Activated CD4-positive, alpha-beta T cell treated with anti-CD3 and anti-CD28 coated beads for 36 hours (primary cell): ENCODE measurements at regions of chr1 and their contacts with region 1.

Region 1: GRCh38 chr1:48236716-48237470 is 14.4 kb downstream of the SLC5A9 start:
- DNase-seq: no peak
- ATAC-seq: no peak
- H3K4me3 Mint-ChIP-seq: no peak overlapping the region
- H3K27ac Mint-ChIP-seq: no peak overlapping the region
- H3K4me1 Mint-ChIP-seq: no peaks in the 10 kb centered on the region
- H3K27me3 Mint-ChIP-seq: no peaks in the 10 kb centered on the region

Region 2: DNA sequence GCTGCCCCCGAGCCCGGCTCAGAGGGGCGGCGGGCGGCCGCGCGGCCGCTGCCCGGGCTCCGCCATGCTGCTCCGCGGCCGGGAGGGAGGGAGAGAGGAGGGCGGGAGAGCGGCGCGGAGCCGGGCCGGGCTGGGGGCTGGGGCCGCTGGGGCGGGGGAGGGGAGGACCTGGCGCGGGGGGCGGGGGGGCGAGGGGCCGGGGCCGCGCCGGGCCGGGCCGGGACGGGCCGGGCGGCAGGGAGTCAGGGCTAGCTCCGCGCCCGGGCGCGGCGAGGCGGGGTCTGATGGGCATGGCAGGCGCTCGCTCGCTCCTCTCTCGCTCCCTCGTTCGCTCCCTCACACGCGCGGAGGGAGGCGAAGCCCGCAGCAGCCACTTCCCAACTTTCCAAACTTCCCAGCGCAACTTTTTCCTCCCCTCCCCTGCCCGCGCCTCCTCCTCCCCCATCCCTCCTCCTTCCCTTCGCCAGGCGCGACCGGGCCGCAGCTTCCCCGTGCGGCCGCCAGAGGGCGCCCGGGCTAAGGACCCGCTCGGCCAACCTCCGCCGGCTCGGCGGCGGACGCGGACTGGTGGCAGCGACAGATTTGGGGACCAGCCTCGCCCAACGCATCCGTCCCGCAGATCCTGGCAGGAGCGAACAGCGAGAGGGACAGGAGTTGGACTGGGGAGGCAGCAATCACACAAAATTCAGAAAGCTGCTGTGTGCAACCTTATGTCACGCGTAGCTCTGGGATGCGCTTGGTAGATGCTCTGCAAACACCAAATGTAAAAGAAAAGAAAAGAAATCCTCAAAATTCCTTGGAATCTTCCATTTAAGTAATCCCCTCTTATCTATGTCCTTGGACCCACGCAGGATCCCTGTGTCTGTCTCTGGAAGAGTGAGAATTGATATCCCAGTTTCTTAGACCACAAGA is 239.3 kb before region 1 on chr1 and contains the start of gene TRABD2B:
- CTCF ChIA-PET with region 1: interaction called, 3 read pairs
- POLR2A ChIA-PET with region 1: no interaction called
- intact Hi-C with region 1: loop called in 1 of 2 experiments (anchors 2 kb)
- DNase-seq: peak; percentile 80
- ATAC-seq: peak; percentile 92
- H3K4me3 Mint-ChIP-seq: peak within 1 kb of the TSS; percentile 53
- H3K27ac Mint-ChIP-seq: no peak within 1 kb of the TSS
- H3K4me1 Mint-ChIP-seq: peaks cover 4% of the 10 kb centered on the region
- H3K27me3 Mint-ChIP-seq: peaks cover 40% of the 10 kb centered on the region
- total RNA-seq, gene TRABD2B: not detected

Region 3: GRCh38 chr1:48093696-48094528 is 143.0 kb before region 1 on chr1:
- CTCF ChIA-PET with region 1: interaction called, 8 read pairs
- POLR2A ChIA-PET with region 1: no interaction called
- intact Hi-C with region 1: loop called (anchors 1 kb)
- DNase-seq: peak; percentile 86
- ATAC-seq: peak; percentile 89
- H3K4me3 Mint-ChIP-seq: peak overlapping the region; percentile 15
- H3K27ac Mint-ChIP-seq: no peak overlapping the region
- H3K4me1 Mint-ChIP-seq: peaks cover 4% of the 10 kb centered on the region
- H3K27me3 Mint-ChIP-seq: peaks cover 50% of the 10 kb centered on the region

Region 4: GRCh38 chr1:48109390-48110013 is 127.4 kb before region 1 on chr1:
- CTCF ChIA-PET with region 1: interaction called, 3 read pairs
- POLR2A ChIA-PET with region 1: no interaction called
- intact Hi-C with region 1: loop called in 1 of 2 experiments (anchors 1 kb)
- DNase-seq: no peak
- ATAC-seq: no peak
- H3K4me3 Mint-ChIP-seq: no peak overlapping the region
- H3K27ac Mint-ChIP-seq: no peak overlapping the region
- H3K4me1 Mint-ChIP-seq: peaks cover 5% of the 10 kb centered on the region
- H3K27me3 Mint-ChIP-seq: peaks cover 7% of the 10 kb centered on the region

Region 5: DNA sequence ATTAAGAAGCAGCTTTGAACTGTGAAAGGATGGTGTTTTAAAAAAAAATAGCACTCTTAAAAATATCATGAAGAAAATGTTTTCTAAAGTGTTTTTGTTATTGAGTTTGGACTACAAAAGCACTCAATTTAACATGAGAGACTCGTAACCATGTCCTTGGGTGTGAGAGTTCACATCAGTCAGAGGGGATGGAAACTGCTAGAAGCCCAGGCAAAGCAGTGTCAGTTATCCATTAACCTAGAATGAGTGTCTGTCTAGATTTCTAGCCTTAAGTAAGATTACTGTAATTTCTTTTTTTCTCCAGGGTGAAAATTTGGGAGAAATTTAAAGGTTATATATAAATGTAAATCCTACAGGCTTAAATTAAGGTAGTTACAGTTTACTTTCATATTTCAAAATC is 17.4 kb after region 1 on chr1:
- CTCF ChIA-PET with region 1: no interaction called
- POLR2A ChIA-PET with region 1: no interaction called
- intact Hi-C with region 1: no loop called
- DNase-seq: no peak
- ATAC-seq: no peak
- H3K4me3 Mint-ChIP-seq: no peak overlapping the region
- H3K27ac Mint-ChIP-seq: no peak overlapping the region
- H3K4me1 Mint-ChIP-seq: no peaks in the 10 kb centered on the region
- H3K27me3 Mint-ChIP-seq: peaks cover 2% of the 10 kb centered on the region